Ovary (tissue), 10 donors: ENCODE measurements at regions of chr6 and their contacts with region 1.

Region 1: DNA sequence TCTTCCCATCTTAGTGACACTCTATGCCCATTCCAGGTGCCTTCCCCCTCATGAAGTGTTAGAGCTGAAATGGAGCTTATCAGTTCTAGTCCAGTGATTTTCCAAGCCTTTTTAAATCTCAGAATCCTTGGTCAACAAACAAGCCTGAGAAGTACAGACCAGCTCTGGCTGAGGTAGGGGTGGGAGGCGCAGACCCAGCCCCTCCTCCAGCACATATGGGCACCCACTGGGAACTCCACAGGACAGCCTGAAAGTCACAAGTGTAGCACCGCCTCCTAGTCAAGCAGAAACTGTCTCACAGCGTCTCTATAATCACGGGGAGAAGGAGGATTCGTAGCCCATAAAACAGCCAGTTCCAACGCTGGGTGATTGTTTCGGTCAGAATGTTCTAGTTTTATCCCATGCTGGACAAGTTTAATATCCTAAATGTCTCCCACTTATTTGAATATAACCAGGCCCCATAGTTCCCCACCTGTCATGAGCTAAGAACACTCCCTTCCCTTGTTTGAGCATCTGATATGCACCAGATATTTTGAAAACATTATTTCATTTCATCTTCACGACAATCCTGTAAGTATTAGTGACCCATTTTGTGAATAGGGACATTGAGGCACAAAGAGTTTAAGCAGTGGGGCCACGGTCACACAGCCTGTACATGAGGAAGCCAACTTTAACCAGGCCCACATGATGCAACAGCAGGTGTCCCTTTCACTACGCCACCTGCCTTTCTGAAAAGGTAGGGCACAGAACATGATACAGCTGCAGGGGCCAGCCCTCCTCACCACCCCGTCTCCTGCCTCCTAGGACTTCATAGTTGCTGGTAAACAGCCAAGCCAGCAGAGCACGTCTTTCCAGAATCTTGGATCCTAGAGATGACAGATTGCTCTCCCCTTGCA is 40.1 kb downstream of the TRAF3IP2 start:
- DNase-seq: no peak
- H3K4me3 ChIP-seq: no peak overlapping the region
- H3K27ac ChIP-seq: no peak overlapping the region
- H3K4me1 ChIP-seq: peaks cover 6% of the 10 kb centered on the region
- H3K27me3 ChIP-seq: no peaks in the 10 kb centered on the region
- CTCF ChIP-seq: no peak
- EP300 ChIP-seq: no peak
- POLR2A ChIP-seq: no peak

Region 2: DNA sequence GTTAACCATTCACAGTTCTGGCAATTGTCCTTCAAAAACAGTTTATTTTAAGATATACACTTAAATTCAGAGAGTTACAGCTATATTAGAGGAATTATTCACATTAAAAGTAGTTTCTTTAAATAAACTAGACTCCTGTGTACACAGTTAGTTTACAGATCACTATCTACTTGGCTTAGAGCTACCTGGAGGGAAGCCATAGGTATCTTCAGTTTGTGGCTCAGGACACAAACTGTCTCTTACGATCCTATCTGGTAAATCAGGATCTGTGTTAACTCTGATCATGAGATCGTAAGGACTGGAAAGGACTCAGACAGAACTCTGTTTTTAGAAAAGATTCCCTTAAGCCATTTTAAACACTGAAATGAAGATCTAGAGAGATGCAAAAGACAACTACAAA is 243.4 kb before region 1 on chr6:
- intact Hi-C with region 1: no loop called
- DNase-seq: no peak
- H3K4me3 ChIP-seq: no peak overlapping the region
- H3K27ac ChIP-seq: no peak overlapping the region
- H3K4me1 ChIP-seq: no peaks in the 10 kb centered on the region
- H3K27me3 ChIP-seq: no peaks in the 10 kb centered on the region
- CTCF ChIP-seq: no peak
- EP300 ChIP-seq: no peak
- POLR2A ChIP-seq: no peak

Region 3: GRCh38 chr6:111517965-111518364 is 47.6 kb before region 1 on chr6:
- intact Hi-C with region 1: loop called in 1 of 4 experiments (anchors 2 kb)
- DNase-seq: no peak
- H3K4me3 ChIP-seq: no peak overlapping the region
- H3K27ac ChIP-seq: no peak overlapping the region
- H3K4me1 ChIP-seq: no peaks in the 10 kb centered on the region
- H3K27me3 ChIP-seq: no peaks in the 10 kb centered on the region
- CTCF ChIP-seq: no peak
- EP300 ChIP-seq: no peak
- POLR2A ChIP-seq: no peak